Left ventricle myocardium inferior (tissue), 1 donor: ENCODE measurements at regions of chr6 and their contacts with region 1.

Region 1: DNA sequence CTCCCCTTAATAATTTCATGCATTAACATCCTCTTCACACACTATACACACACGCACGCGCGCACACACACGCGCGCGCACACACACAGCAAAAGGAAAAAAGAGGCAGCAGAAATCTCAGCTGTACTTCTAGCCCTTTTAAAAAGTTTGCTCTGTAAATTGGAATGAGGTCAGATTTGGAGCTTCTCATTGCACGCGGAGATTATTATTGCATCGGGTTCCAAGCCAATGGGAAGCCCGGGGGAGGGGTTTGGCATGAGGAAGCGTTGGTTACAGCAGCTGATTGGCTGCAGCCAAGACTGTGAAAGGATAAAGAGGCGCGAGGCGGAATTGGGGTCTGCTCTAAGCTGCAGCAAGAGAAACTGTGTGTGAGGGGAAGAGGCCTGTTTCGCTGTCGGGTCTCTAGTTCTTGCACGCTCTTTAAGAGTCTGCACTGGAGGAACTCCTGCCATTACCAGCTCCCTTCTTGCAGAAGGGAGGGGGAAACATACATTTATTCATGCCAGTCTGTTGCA is at the start of gene SOX4:
- DNase-seq: peak; percentile 93
- H3K4me3 ChIP-seq: peak within 1 kb of the TSS; percentile 85
- H3K27ac ChIP-seq: peak within 1 kb of the TSS; percentile 93
- H3K4me1 ChIP-seq: peaks cover 51% of the 10 kb centered on the region
- H3K27me3 ChIP-seq: no peaks in the 10 kb centered on the region
- CTCF ChIP-seq: no peak
- total RNA-seq, gene SOX4: 3.8 TPM

Region 2: GRCh38 chr6:20564269-20564668 is 1029.2 kb before region 1 on chr6:
- intact Hi-C with region 1: loop called (anchors 5 kb)
- DNase-seq: no peak
- H3K4me3 ChIP-seq: no peak overlapping the region
- H3K27ac ChIP-seq: no peak overlapping the region
- H3K4me1 ChIP-seq: peaks cover 8% of the 10 kb centered on the region
- H3K27me3 ChIP-seq: no peaks in the 10 kb centered on the region
- CTCF ChIP-seq: peak; percentile 79

Region 3: GRCh38 chr6:22145823-22146677 is 552.6 kb after region 1 on chr6:
- intact Hi-C with region 1: loop called (anchors 10 kb)
- DNase-seq: no peak
- H3K4me3 ChIP-seq: peak overlapping the region; percentile 55
- H3K27ac ChIP-seq: no peak overlapping the region
- H3K4me1 ChIP-seq: peaks cover 79% of the 10 kb centered on the region
- H3K27me3 ChIP-seq: no peaks in the 10 kb centered on the region
- CTCF ChIP-seq: peak; percentile 44